Uterus (tissue), 4 donors: ENCODE measurements at regions of chr3 and their contacts with region 1.

Region 1: GRCh38 chr3:123449997-123450604 is 1.2 kb upstream of the ADCY5 start:
- DNase-seq: peak; percentile 52 to 53
- H3K4me3 ChIP-seq: peak overlapping the region; percentile 51 to 62
- H3K27ac ChIP-seq: peak overlapping the region; percentile 86
- H3K4me1 ChIP-seq: peaks cover 0 to 4% of the 10 kb centered on the region in 2 donors
- H3K27me3 ChIP-seq: no peaks in the 10 kb centered on the region
- CTCF ChIP-seq: no peak
- POLR2A ChIP-seq: no peak

Region 2: GRCh38 chr3:123344175-123344906 is 105.8 kb before region 1 on chr3:
- intact Hi-C with region 1: loop called (anchors 10 kb)
- DNase-seq: no peak
- H3K4me3 ChIP-seq: no peak overlapping the region
- H3K27ac ChIP-seq: peak overlapping the region in 1 of 2 donors; percentile 21
- H3K4me1 ChIP-seq: no peaks in the 10 kb centered on the region
- H3K27me3 ChIP-seq: no peaks in the 10 kb centered on the region
- CTCF ChIP-seq: no peak
- POLR2A ChIP-seq: no peak

Region 3: DNA sequence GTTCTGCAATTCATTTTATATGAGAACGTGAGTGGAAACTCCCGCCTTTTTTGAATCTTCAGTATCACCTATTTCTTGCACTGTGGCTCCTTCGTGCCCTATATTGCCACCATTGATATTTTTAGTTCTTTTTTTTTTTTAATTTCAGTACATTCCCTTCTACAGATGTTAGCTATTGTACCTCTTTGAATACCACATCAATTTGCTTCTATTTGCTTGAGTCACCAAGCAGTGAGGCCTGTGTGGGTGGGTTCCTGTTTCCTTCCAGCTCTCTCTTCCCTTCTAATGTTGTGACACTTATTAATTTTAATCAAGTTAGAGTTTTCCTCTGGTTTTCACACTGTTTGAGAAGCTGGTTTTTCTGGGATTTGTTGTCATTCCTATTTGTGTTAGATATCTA is 126.0 kb after region 1 on chr3:
- intact Hi-C with region 1: no loop called
- DNase-seq: no peak
- H3K4me3 ChIP-seq: no peak overlapping the region
- H3K27ac ChIP-seq: no peak overlapping the region
- H3K4me1 ChIP-seq: no peaks in the 10 kb centered on the region
- H3K27me3 ChIP-seq: no peaks in the 10 kb centered on the region
- CTCF ChIP-seq: no peak
- POLR2A ChIP-seq: no peak